ENCODE measurements at regions of chr6 and their contacts with region 1.

Region 1: DNA sequence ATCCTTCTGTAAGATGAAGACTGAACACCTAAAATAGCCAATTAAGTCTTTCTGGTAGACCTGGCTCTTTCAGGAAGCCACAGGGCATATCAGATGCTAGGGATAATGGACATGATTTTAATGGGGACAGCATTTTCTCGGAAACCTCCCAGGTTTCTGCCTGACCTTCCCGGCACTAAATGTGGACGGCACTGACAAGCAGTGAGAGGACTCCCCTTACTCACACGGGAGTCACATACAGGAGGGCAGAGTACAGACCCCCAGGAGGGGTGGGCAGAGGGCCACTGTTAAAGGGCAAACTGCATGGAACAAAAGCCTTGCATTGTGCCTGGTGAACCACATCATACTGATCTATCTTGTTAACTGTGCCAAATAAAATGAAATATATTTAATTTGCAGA is 19.9 kb downstream of the PSMG4 start:
- DNase-seq: no peak
- ATAC-seq: no peak
- H3K4me3 ChIP-seq: no peak overlapping the region
- H3K4me3 Mint-ChIP-seq: no peak overlapping the region
- H3K27ac ChIP-seq: no peak overlapping the region
- H3K27ac Mint-ChIP-seq: no peak overlapping the region
- H3K4me1 ChIP-seq: no peaks in the 10 kb centered on the region
- H3K4me1 Mint-ChIP-seq: peaks cover 8 to 17% of the 10 kb centered on the region in 2 donors
- H3K27me3 ChIP-seq: no peaks in the 10 kb centered on the region
- H3K27me3 Mint-ChIP-seq: no peaks in the 10 kb centered on the region
- CTCF ChIP-seq: no peak

Region 2: GRCh38 chr6:3776881-3777507 is 498.3 kb after region 1 on chr6:
- intact Hi-C with region 1: no loop called
- DNase-seq: no peak
- ATAC-seq: no peak
- H3K4me3 ChIP-seq: no peak overlapping the region
- H3K4me3 Mint-ChIP-seq: no peak overlapping the region
- H3K27ac ChIP-seq: no peak overlapping the region
- H3K27ac Mint-ChIP-seq: no peak overlapping the region
- H3K4me1 ChIP-seq: no peaks in the 10 kb centered on the region
- H3K4me1 Mint-ChIP-seq: no peaks in the 10 kb centered on the region
- H3K27me3 ChIP-seq: no peaks in the 10 kb centered on the region
- H3K27me3 Mint-ChIP-seq: peaks cover 0 to 7% of the 10 kb centered on the region in 2 donors
- CTCF ChIP-seq: no peak

Region 3: DNA sequence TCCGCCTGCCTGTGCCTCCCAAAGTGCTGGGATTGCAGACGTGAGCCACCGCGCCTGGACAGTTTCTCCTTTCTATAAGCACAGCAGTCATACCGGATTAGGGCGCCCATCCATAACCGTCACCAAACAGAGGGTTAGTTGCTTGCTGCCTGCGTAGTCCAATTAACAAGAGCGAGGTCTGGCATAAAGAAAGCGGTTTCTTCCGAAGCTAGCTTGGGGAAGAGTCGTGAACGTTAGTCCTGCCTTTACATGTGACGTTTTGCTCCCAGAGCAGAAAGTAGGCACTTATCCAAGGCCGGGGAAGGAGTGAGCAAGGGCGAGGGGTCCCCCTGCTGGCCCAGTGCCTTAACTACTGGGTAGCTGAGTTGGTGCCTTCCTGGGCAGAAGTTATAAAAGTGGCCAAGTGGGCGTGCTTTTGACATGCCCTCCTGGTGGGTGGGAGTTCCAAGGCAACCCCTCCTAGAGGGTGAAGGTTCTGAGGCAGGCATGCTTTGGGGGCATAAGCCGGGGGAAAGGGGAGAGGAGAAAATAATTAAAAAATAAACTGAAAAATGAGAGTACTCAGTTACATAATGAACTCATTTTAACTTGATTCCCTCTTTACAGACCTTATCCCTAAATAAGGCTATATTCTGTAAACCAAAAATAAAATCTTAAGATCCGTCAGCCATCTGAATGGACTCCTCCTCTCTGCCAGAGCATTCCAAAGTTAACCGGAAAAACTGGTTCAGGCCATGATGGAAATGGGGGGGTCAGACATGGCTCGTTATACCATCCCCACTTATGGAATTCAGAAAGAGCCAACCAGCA is 712.2 kb after region 1 on chr6:
- intact Hi-C with region 1: loop called (anchors 1 kb)
- DNase-seq: peak; percentile 62 to 79
- ATAC-seq: peak; percentile 87 to 98 (median 96)
- H3K4me3 ChIP-seq: no peak overlapping the region
- H3K4me3 Mint-ChIP-seq: no peak overlapping the region
- H3K27ac ChIP-seq: no peak overlapping the region
- H3K27ac Mint-ChIP-seq: no peak overlapping the region
- H3K4me1 ChIP-seq: peaks cover 4% of the 10 kb centered on the region
- H3K4me1 Mint-ChIP-seq: peaks cover 6 to 31% of the 10 kb centered on the region in 2 donors
- H3K27me3 ChIP-seq: no peaks in the 10 kb centered on the region
- H3K27me3 Mint-ChIP-seq: no peaks in the 10 kb centered on the region
- CTCF ChIP-seq: peak; percentile 75

Measured in natural killer cell (primary cell).